Caco-2 (cell line): ENCODE measurements at regions of chr11 and their contacts with region 1.

Region 1: DNA sequence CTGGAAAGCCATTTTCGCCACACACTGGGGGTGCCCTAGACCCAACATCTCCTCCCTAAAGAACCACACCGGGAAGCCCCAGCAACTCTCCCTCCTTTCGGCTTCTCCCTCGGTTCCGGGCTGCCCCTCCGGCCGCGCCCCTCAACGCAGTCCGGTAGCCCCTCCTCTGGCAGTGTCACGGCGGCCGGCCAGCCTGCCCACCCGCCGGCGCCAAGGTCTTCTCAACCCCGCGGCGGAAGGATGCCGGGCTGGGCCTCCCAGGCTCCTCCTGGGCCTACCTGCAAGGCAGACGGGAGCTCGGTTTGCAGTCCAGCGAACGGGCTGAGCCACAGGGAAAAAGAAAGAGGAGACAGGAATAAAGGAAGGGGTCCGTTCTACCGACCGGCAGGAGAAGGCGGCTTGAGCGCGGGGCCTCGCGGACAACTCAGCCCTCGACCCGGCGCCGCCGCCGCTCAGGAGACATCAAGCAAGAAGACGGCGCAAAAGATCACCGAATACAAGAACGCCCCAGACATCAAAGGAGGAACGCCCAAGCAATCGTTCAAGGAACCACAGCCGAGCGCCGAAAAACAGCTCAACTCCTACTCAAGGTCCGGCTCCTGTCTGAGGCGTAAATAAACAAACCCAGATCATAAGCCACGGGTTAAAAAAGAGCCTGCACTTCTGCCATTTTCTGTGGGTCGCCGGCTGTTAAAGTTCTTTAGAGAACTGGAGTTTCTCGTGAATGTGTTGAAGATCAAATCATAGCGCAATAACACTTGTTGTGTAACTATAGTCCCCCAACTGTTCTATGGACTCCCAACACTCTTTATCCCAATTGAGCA is at the start of gene AMBRA1:
- DNase-seq: peak; percentile 93
- H3K4me3 ChIP-seq: peak within 1 kb of the TSS; percentile 79
- H3K4me3 Mint-ChIP-seq: peak within 1 kb of the TSS; percentile 96
- H3K27ac Mint-ChIP-seq: peak within 1 kb of the TSS; percentile 91
- H3K4me1 ChIP-seq: peaks cover 42% of the 10 kb centered on the region
- H3K4me1 Mint-ChIP-seq: peaks cover 24% of the 10 kb centered on the region
- H3K27me3 ChIP-seq: no peaks in the 10 kb centered on the region
- H3K27me3 Mint-ChIP-seq: no peaks in the 10 kb centered on the region
- CTCF ChIP-seq: no peak
- total RNA-seq, gene AMBRA1: 48.1 and 51.5 TPM in 2 replicates

Region 2: DNA sequence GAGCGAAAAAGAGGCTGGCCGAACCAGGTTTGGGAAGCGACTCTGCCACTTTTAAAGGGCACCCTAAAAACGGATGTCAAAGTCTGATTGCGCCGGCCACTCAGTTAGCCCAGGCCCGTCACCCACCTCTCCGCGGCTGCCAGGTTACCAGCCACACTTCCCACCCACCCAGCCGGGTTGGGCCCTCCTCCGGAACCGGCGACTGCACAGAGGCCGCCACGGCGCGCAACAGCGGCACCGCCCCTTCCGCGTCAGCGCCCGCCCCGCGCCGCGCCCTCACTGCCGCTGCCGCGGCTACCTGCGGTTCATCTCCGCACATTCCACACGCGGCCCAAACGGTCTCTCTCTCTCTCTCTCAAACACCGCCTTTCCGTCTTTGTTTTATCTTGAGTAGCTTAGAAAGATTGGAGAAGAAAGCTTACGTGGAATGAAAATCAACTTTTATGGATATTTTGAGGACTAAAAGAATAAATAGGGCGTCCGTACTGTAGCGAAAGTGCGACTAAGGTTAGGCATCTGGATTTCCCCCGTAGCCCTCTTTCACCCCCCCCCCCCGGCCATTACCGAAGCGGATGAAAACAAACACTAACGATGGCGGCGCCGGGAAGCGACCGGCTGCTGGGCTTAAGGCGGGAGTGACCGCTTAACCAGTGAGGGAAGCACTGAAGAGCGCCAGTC is 23.4 kb after region 1 on chr11 and contains the starts of genes ATG13 and HARBI1:
- CTCF ChIA-PET with region 1: no interaction called
- POLR2A ChIA-PET with region 1: interaction called, 6 read pairs
- intact Hi-C with region 1: loop called (anchors 1 kb)
- DNase-seq: peak; percentile 92 to 96
- H3K4me3 ChIP-seq: peak within 1 kb of the TSS; percentile 96
- H3K4me3 Mint-ChIP-seq: peak within 1 kb of the TSS; percentile 90
- H3K27ac Mint-ChIP-seq: peak within 1 kb of the TSS; percentile 97
- H3K4me1 ChIP-seq: peaks cover 11% of the 10 kb centered on the region
- H3K4me1 Mint-ChIP-seq: peaks cover 18% of the 10 kb centered on the region
- H3K27me3 ChIP-seq: no peaks in the 10 kb centered on the region
- H3K27me3 Mint-ChIP-seq: no peaks in the 10 kb centered on the region
- CTCF ChIP-seq: no peak
- total RNA-seq, gene ATG13: 75.9 and 101 TPM in 2 replicates
- total RNA-seq, gene HARBI1: 7.6 and 9.1 TPM in 2 replicates